GM23248 (cell line): ENCODE measurements at regions of chr17 and their contacts with region 1.

Region 1: DNA sequence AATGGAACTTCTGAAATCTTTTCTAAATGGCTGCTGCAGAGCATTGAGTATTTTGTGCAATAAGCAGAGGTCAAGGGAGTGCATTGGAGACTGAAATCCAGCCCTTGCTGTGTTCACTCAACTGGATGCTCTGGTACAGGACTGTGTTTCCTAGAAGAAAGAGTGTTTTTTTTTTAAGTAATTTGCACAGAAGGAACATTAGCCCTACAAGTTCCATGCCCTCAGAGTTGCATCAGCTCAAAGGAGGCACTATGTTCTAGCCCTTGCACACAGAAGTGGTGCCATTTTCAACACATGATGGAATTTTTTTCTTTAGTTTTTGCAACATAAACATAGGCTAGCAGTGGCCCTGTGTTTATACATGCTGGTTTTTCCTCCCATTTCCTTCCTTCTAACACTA is 144.1 kb upstream of the HLF start:
- DNase-seq: no peak
- H3K4me3 ChIP-seq: no peak overlapping the region
- H3K27ac ChIP-seq: no peak overlapping the region
- H3K4me1 ChIP-seq: no peaks in the 10 kb centered on the region
- H3K27me3 ChIP-seq: no peaks in the 10 kb centered on the region

Region 2: GRCh38 chr17:55067697-55068439 is 52.8 kb before region 1 on chr17:
- in situ Hi-C with region 1: no loop called
- DNase-seq: peak; percentile 40
- H3K4me3 ChIP-seq: no peak overlapping the region
- H3K27ac ChIP-seq: no peak overlapping the region
- H3K4me1 ChIP-seq: peaks cover 5% of the 10 kb centered on the region; the same call in 1 of the 2 replicates
- H3K27me3 ChIP-seq: no peaks in the 10 kb centered on the region

Region 3: DNA sequence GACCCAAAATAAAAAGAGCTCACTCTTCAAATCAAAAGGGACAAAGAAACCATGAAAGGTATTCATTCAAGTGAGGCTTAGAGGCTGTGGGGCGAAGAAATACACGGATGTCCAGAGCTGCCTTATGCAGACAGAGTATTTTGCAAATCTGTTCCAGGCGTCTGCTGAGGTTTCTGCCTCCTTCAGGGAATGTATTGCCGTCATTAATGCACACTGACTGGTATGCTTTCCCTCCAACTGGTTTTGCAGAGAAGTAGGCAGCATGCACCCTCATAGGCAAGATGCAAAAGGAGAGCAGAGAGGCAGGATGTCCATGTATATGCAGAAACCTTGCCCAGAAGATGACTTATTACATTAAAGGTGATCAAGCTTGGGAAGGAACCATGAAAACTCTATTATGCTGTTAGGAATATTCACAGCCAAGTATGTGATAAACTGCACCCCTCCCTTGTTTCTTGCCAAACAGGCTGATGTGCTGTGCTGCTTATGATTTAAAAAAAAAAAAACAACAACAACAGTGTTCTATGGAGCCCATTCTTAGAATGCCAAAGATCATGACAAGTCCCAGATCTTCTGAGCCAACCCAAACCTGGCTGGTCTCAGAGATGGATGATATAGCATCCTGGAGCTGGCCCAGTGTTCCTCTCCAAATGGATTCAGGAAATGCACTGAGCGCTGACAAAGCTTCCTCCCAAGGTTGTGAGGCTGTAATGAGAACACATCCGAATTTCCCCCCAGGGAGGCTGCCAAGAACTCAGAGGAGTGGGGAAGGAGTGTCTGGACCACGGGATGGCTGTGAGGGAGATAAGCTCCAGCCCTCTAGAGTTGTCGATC is 66.5 kb after region 1 on chr17:
- in situ Hi-C with region 1: loop called (anchors 10 kb)
- DNase-seq: peak; percentile 6
- H3K4me3 ChIP-seq: no peak overlapping the region
- H3K27ac ChIP-seq: no peak overlapping the region
- H3K4me1 ChIP-seq: no peaks in the 10 kb centered on the region
- H3K27me3 ChIP-seq: no peaks in the 10 kb centered on the region

Region 4: DNA sequence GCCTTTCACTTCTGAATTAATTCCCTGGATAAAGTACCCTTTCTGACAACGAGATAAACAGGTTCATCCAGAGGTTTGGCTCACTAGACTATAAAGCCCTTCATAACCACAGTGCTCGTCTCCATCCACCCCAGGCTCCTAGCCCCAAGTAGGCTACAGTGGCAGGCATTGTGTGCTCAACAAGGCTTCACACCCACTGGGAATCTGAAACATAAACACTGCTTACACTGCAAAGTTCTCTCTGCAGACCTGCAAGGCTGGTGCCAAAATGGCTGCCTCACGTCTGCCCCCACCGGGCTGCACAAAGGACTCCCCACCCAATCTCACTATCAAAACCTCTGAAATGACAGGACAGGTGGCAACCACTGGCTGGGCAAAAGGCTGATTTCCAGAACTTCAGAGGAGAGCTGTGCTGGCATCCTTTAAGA is 139.0 kb after region 1 on chr17:
- in situ Hi-C with region 1: no loop called
- DNase-seq: no peak
- H3K4me3 ChIP-seq: no peak overlapping the region
- H3K27ac ChIP-seq: no peak overlapping the region
- H3K4me1 ChIP-seq: no peaks in the 10 kb centered on the region
- H3K27me3 ChIP-seq: peaks cover 26% of the 10 kb centered on the region

Region 5: DNA sequence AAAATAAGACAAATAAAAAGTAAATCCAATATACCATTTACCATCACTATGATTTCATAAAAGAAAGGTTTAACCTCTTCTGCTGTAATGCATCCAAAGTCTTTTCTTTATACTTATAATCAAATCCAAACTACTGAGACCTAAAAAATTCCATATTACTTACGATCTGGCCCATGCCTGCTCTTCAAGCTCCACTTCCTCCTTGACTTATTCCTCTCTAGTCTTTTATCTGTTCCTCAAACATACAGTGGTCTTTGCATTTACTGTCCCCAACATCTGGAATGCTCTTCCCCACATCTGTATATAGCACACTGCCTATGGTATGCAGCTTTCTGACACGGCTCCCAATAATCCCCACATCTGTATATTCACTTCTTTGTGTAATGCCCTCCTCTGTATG is 664.0 kb after region 1 on chr17:
- in situ Hi-C with region 1: no loop called
- DNase-seq: no peak
- H3K4me3 ChIP-seq: no peak overlapping the region
- H3K27ac ChIP-seq: no peak overlapping the region
- H3K4me1 ChIP-seq: peaks cover 13% of the 10 kb centered on the region; the same call in 1 of the 2 replicates
- H3K27me3 ChIP-seq: no peaks in the 10 kb centered on the region